MCF 10A (cell line): ENCODE measurements at regions of chr16 and their contacts with region 1.

Region 1: GRCh38 chr16:68257906-68258800 is 6.2 kb upstream of the SLC7A6 start:
- DNase-seq: peak; percentile 67
- H3K4me3 Mint-ChIP-seq: no peak overlapping the region
- H3K27ac Mint-ChIP-seq: peak overlapping the region; percentile 14
- H3K4me1 Mint-ChIP-seq: peaks cover 10% of the 10 kb centered on the region
- H3K27me3 Mint-ChIP-seq: no peaks in the 10 kb centered on the region
- CTCF ChIP-seq: no peak

Region 2: GRCh38 chr16:68244903-68245853 is 13.0 kb before region 1 on chr16 and contains the start of gene PLA2G15:
- CTCF ChIA-PET with region 1: interaction called, 17 read pairs
- POLR2A ChIA-PET with region 1: interaction called, 20 read pairs
- intact Hi-C with region 1: no loop called
- DNase-seq: peak; percentile 93
- H3K4me3 Mint-ChIP-seq: peak within 1 kb of the TSS; percentile 83
- H3K27ac Mint-ChIP-seq: peak within 1 kb of the TSS; percentile 16
- H3K4me1 Mint-ChIP-seq: peaks cover 9% of the 10 kb centered on the region
- H3K27me3 Mint-ChIP-seq: no peaks in the 10 kb centered on the region
- CTCF ChIP-seq: no peak
- total RNA-seq, gene PLA2G15: 4.6 and 6.4 TPM in 2 replicates

Region 3: DNA sequence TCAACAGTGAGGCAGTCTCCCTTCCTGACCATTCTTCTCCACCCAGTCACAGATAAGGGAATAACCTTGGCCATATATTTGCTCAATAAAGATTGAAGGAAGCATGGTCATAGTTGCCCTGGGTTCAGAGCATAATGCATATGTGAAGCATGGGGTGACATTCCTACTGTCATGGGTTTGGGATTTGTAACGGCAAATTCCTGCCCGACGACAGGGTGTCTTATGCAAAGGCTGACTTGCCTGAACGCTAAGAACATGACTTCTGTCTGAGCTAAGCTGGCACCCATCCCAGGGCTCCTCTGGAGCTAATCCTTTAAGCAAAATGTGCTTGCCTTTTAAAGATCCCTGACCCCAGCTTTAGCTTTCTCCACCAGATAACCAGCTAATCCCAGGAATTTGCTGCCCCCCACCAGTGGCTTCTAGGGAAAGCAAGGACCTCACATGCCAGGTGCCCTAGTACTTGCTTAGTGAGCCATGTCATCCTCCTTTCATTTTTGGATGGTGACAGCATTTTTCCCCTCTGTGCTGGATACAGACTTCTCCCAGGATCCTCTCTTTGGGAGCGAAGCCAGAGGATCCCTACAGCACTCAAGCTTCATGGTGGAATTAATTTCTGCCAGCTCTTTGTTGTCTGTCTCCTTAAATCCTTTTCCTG is 40.9 kb after region 1 on chr16:
- CTCF ChIA-PET with region 1: interaction called, 67 read pairs
- POLR2A ChIA-PET with region 1: interaction called, 42 read pairs
- intact Hi-C with region 1: no loop called
- DNase-seq: peak; percentile 50
- H3K4me3 Mint-ChIP-seq: no peak overlapping the region
- H3K27ac Mint-ChIP-seq: peak overlapping the region; percentile 39
- H3K4me1 Mint-ChIP-seq: no peaks in the 10 kb centered on the region
- H3K27me3 Mint-ChIP-seq: no peaks in the 10 kb centered on the region
- CTCF ChIP-seq: no peak